B cell (primary cell): ENCODE measurements at regions of chrX and their contacts with region 1.

Region 1: DNA sequence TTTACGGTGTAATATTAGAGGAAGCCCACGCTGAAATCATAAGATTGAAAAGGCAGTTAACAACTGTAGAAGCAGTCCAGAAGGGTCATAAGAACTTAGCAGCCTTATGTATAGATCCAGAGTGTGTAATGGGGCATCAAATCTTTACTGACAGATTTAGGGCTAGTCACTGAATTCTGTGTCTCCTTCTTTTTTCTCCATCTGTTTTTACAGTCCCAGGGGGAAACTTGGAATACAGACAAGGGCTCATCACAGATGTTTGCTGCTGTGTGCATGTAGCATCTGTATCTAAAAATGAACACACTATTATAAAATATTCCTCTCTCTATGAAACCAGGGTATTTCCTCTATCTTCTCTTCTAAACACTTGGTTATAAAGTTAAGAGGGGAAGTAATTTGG is 43.9 kb downstream of the CYSLTR1 start:
- DNase-seq: no peak
- ATAC-seq: no peak
- H3K4me3 ChIP-seq: no peak overlapping the region
- H3K4me3 Mint-ChIP-seq: no peak overlapping the region
- H3K27ac ChIP-seq: no peak overlapping the region
- H3K27ac Mint-ChIP-seq: no peak overlapping the region
- H3K4me1 ChIP-seq: no peaks in the 10 kb centered on the region
- H3K4me1 Mint-ChIP-seq: peaks cover 4% of the 10 kb centered on the region
- H3K27me3 ChIP-seq: no peaks in the 10 kb centered on the region
- H3K27me3 Mint-ChIP-seq: no peaks in the 10 kb centered on the region
- CTCF ChIP-seq: no peak

Region 2: DNA sequence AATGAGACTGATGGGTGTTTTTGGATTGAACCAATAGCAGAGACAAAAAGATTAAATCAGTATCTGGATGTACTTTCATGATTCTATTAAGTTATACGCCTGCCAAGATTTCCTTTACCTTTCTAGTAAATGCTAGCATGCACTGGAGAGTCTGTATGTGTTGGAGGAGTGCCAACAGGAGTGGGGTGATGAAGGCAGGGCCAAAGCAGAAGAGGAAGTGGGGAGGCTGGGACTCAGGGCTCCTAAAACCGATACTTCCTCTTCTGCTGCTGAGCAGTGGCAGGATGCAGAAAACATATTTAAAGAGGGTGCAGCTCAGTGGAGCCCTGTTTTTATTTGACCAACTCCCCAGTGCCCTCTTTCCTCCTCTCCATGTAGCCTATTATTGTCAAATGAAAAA is 38.3 kb after region 1 on chrX:
- CTCF ChIA-PET with region 1: no interaction called
- POLR2A ChIA-PET with region 1: no interaction called
- intact Hi-C with region 1: loop called (anchors 10 kb)
- DNase-seq: peak; percentile 81
- ATAC-seq: peak; percentile 97
- H3K4me3 ChIP-seq: peak overlapping the region in 1 of 5 experiments; percentile 38
- H3K4me3 Mint-ChIP-seq: peak overlapping the region; percentile 73
- H3K27ac ChIP-seq: peak overlapping the region in 1 of 2 donors; percentile 74
- H3K27ac Mint-ChIP-seq: peak overlapping the region; percentile 77
- H3K4me1 ChIP-seq: peaks cover 41 to 45% of the 10 kb centered on the region in 2 donors
- H3K4me1 Mint-ChIP-seq: peaks cover 55% of the 10 kb centered on the region
- H3K27me3 ChIP-seq: no peaks in the 10 kb centered on the region
- H3K27me3 Mint-ChIP-seq: no peaks in the 10 kb centered on the region
- CTCF ChIP-seq: no peak